GM13977 (cell line): ENCODE measurements at regions of chr6 and their contacts with region 1.

Region 1: GRCh38 chr6:113909234-113909856 is 52.2 kb downstream of the MARCKS start:
- DNase-seq: peak; percentile 63
- CTCF ChIP-seq: peak; percentile 58

Region 2: DNA sequence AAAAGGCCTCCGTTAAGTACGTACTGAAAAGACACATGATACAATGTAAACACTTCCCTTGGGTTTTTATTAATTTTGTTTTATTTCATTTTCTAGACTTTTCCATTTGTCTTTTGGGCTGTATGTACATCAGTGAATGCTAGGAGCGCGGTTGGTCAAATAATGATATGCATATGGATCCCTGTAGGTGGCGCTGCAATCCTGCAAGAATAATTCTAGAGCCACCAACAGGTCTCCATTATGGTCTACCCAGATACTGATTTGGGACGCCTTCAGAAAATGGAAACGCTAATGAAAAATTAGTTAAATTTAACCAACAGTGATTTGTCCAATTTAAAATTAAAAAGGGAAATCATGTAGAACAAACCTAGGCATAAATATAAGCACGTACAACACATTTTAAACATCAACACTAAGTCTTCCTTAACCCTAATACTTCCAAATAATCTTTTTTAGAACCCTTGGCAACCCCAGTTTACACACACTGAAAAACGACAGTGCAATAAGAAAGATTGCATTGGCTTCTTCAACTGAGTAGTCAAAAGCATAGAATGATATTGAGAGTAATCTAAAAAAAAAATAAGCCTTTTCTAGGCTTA is 1128.7 kb before region 1 on chr6:
- in situ Hi-C with region 1: loop called (anchors 10 kb)
- DNase-seq: peak; percentile 57
- CTCF ChIP-seq: peak; percentile 72